A549 (cell line): ENCODE measurements at regions of chr7 and their contacts with region 1.

Region 1: GRCh38 chr7:107743567-107744344 is at the start of gene CBLL1:
- DNase-seq: peak; percentile 89 to 96
- ATAC-seq: peak; percentile 95 to 98
- H3K4me3 ChIP-seq: peak within 1 kb of the TSS; percentile 66
- H3K27ac ChIP-seq: peak within 1 kb of the TSS; percentile 95 to 96
- H3K4me1 ChIP-seq: peaks cover 29% of the 10 kb centered on the region
- CTCF ChIP-seq: peak; percentile 77
- EP300 ChIP-seq: no peak; a peak in 1 of 5 replicates
- POLR2A ChIP-seq: peak; percentile 56
- RAD21 ChIP-seq: peak; percentile 49 to 68
- polyA plus RNA-seq, gene CBLL1: 26.1 and 27.3 TPM in 2 replicates

Region 2: GRCh38 chr7:107725151-107725740 is 18.5 kb before region 1 on chr7:
- CTCF ChIA-PET with region 1: interaction called, 37 read pairs
- POLR2A ChIA-PET with region 1: interaction called, 4 read pairs
- DNase-seq: peak; percentile 60 to 61
- ATAC-seq: peak in 1 of 2 experiments; percentile 67; a peak in 2 of 6 replicates
- H3K4me3 ChIP-seq: no peak overlapping the region
- H3K27ac ChIP-seq: no peak overlapping the region
- H3K4me1 ChIP-seq: no peaks in the 10 kb centered on the region
- CTCF ChIP-seq: peak; percentile 91
- EP300 ChIP-seq: no peak
- POLR2A ChIP-seq: no peak
- RAD21 ChIP-seq: peak; percentile 73 to 78

Region 3: DNA sequence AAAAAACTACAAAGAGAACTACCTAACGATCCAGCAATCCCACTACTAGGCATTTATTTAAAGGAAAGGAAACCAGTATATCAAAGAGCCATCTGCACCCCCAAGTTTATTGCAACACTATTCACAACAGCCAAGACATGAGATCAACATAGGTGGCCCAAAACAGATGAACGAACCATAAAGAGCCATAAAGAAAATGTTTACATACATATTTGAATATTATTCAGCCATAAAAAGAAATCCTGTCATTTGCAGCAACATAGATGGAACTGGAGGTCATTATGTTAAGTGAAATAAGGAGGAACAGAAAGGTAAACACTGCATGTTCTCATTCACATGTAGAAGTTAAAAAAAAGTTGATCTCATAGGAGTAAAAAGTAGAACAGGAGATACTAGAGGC is 74.9 kb after region 1 on chr7:
- CTCF ChIA-PET with region 1: no interaction called
- POLR2A ChIA-PET with region 1: no interaction called
- DNase-seq: no peak
- ATAC-seq: no peak
- H3K4me3 ChIP-seq: no peak overlapping the region
- H3K27ac ChIP-seq: no peak overlapping the region
- H3K4me1 ChIP-seq: no peaks in the 10 kb centered on the region
- CTCF ChIP-seq: no peak
- EP300 ChIP-seq: no peak
- POLR2A ChIP-seq: no peak
- RAD21 ChIP-seq: no peak

Region 4: DNA sequence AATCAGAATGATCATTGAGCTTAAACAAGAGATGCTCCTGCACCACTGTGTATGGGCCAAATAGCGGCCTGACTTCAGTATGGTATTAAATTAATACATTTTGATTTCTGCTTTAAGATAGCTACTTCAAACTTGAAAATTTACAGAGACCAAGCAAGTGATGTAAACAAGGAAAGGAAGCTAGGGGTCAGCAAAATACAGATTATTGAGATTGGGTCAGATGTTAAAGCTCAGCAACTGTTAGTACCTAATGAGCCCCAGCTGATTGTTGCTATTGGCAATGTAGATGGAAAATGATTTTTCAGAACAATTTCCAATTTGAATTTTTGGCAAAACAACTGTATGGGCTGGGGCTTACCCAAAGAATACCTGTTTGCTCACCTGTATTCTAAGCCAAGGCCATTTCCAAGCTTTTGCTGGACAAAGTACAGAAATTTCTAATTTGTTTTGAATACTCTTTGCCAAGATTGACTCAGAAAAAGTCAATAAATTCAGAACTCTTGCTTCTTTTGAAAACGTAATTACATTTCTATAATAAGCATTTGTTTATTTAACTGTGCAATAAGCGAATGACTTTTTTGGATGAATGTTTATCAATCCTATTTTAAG is 124.2 kb after region 1 on chr7:
- CTCF ChIA-PET with region 1: interaction called, 132 read pairs
- POLR2A ChIA-PET with region 1: interaction called, 7 read pairs
- DNase-seq: no peak
- ATAC-seq: no peak
- H3K4me3 ChIP-seq: no peak overlapping the region
- H3K27ac ChIP-seq: no peak overlapping the region
- H3K4me1 ChIP-seq: no peaks in the 10 kb centered on the region
- CTCF ChIP-seq: no peak
- EP300 ChIP-seq: no peak
- POLR2A ChIP-seq: no peak
- RAD21 ChIP-seq: no peak

Region 5: GRCh38 chr7:107879400-107880035 is 135.8 kb after region 1 on chr7:
- CTCF ChIA-PET with region 1: interaction called, 132 read pairs
- POLR2A ChIA-PET with region 1: interaction called, 40 read pairs
- DNase-seq: peak; percentile 56 to 63
- ATAC-seq: peak; percentile 75 to 87; a peak in 5 of 6 replicates
- H3K4me3 ChIP-seq: no peak overlapping the region
- H3K27ac ChIP-seq: no peak overlapping the region
- H3K4me1 ChIP-seq: no peaks in the 10 kb centered on the region
- CTCF ChIP-seq: peak; percentile 83
- EP300 ChIP-seq: no peak
- POLR2A ChIP-seq: no peak
- RAD21 ChIP-seq: peak; percentile 75 to 81

Region 6: GRCh38 chr7:107924841-107925504 is 181.2 kb after region 1 on chr7:
- CTCF ChIA-PET with region 1: no interaction called
- POLR2A ChIA-PET with region 1: no interaction called
- DNase-seq: no peak
- ATAC-seq: no peak
- H3K4me3 ChIP-seq: no peak overlapping the region
- H3K27ac ChIP-seq: no peak overlapping the region
- H3K4me1 ChIP-seq: peaks cover 13% of the 10 kb centered on the region; the same call in 2 of the 3 replicates
- CTCF ChIP-seq: no peak
- EP300 ChIP-seq: no peak
- POLR2A ChIP-seq: no peak
- RAD21 ChIP-seq: no peak

Region 7: GRCh38 chr7:108030516-108030915 is 286.8 kb after region 1 on chr7:
- CTCF ChIA-PET with region 1: no interaction called
- POLR2A ChIA-PET with region 1: no interaction called
- DNase-seq: no peak
- ATAC-seq: no peak
- H3K4me3 ChIP-seq: no peak overlapping the region
- H3K27ac ChIP-seq: peak overlapping the region in 1 of 2 experiments; percentile 16; a peak in 2 of 6 replicates
- H3K4me1 ChIP-seq: peaks cover 36% of the 10 kb centered on the region
- CTCF ChIP-seq: no peak
- EP300 ChIP-seq: no peak
- POLR2A ChIP-seq: no peak
- RAD21 ChIP-seq: no peak